CD4-positive, alpha-beta memory T cell (primary cell): ENCODE measurements at regions of chr17 and their contacts with region 1.

Region 1: GRCh38 chr17:49223517-49224197 is 6.9 kb downstream of the PHOSPHO1 start:
- DNase-seq: peak; percentile 42 to 55 (median 51)
- H3K4me3 ChIP-seq: peak overlapping the region in 1 of 2 donors; percentile 50
- H3K4me3 Mint-ChIP-seq: peak overlapping the region; percentile 75 to 89 (median 83)
- H3K27ac ChIP-seq: no peak overlapping the region
- H3K27ac Mint-ChIP-seq: peak overlapping the region in 5 of 7 donors; percentile 38 to 80 (median 57)
- H3K4me1 ChIP-seq: peaks cover 45% of the 10 kb centered on the region
- H3K4me1 Mint-ChIP-seq: peaks cover 19 to 50% (median 29%) of the 10 kb centered on the region in 4 donors
- H3K27me3 ChIP-seq: no peaks in the 10 kb centered on the region
- H3K27me3 Mint-ChIP-seq: peaks cover 3 to 7% of the 10 kb centered on the region in 2 donors

Region 2: DNA sequence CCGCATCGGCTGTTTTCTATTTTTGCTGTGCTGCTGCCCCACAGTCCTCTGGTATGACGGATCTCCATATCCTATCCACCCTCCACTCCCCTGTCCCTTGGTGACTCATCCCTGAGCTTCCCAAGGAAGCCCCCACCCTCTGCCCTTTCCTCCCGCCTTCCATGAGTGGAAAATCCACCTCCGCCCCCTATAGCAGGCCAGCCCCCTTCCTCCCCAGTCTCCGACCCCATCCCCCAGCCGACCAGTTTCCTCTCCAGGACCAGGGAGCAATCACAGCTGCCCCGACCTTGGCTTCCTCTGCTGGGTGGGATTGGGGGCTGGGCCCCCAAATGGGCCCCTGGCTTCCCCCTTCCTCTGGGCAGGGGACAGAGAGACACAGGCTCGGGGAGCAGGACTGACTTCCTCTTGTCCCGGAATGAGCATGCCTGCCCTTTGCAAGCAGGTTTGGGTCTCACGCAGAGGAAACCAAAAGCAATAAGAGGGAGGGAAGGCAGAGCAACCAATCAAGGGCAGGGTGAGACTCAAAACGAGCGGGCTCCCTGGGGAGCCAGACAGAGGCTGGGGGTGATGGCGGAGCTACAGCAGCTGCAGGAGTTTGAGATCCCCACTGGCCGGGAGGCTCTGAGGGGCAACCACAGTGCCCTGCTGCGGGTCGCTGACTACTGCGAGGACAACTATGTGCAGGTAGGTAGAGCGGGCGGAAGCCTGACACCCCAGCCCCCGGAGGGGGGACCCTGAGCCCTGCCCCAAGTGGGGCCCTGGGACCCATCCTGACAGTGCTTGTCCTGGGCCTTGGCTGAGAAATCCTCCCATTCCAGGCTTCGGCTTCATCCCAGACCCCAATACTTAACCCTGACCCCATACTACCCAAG is 13.3 kb before region 1 on chr17 and contains the starts of genes ABI3 and GNGT2:
- CTCF ChIA-PET with region 1: interaction called, 28 read pairs
- POLR2A ChIA-PET with region 1: interaction called, 23 read pairs
- intact Hi-C with region 1: loop called (anchors 1 kb)
- DNase-seq: peak; percentile 58 to 71 (median 68)
- H3K4me3 ChIP-seq: peak within 1 kb of the TSS; percentile 77 to 89
- H3K4me3 Mint-ChIP-seq: peak within 1 kb of the TSS; percentile 92 to 98 (median 96)
- H3K27ac ChIP-seq: peak within 1 kb of the TSS; percentile 65
- H3K27ac Mint-ChIP-seq: peak within 1 kb of the TSS; percentile 56 to 95 (median 91)
- H3K4me1 ChIP-seq: peaks cover 71% of the 10 kb centered on the region
- H3K4me1 Mint-ChIP-seq: peaks cover 47 to 72% (median 62%) of the 10 kb centered on the region in 4 donors
- H3K27me3 ChIP-seq: no peaks in the 10 kb centered on the region
- H3K27me3 Mint-ChIP-seq: no peaks in the 10 kb centered on the region
- total RNA-seq, gene ABI3: 9.5 to 11.5 TPM
- total RNA-seq, gene GNGT2: 2.9 to 3.3 TPM

Region 3: GRCh38 chr17:49399995-49400394 is 176.3 kb after region 1 on chr17:
- CTCF ChIA-PET with region 1: no interaction called
- POLR2A ChIA-PET with region 1: no interaction called
- intact Hi-C with region 1: loop called (anchors 5 kb)
- DNase-seq: no peak
- H3K4me3 ChIP-seq: no peak overlapping the region
- H3K4me3 Mint-ChIP-seq: no peak overlapping the region
- H3K27ac ChIP-seq: no peak overlapping the region
- H3K27ac Mint-ChIP-seq: no peak overlapping the region
- H3K4me1 ChIP-seq: peaks cover under 1% of the 10 kb centered on the region
- H3K4me1 Mint-ChIP-seq: peaks cover under 1 to 12% (median 2%) of the 10 kb centered on the region in 4 donors
- H3K27me3 ChIP-seq: no peaks in the 10 kb centered on the region
- H3K27me3 Mint-ChIP-seq: no peaks in the 10 kb centered on the region